ENCODE measurements at regions of chr13 and their contacts with region 1.

Region 1: GRCh38 chr13:99436686-99437416 is 64.4 kb upstream of the TM9SF2 start:
- DNase-seq: peak; percentile 78
- ATAC-seq: peak; percentile 72
- H3K4me3 ChIP-seq: peak overlapping the region in 1 of 2 experiments; percentile 34; a peak in 3 of 4 replicates
- H3K27ac ChIP-seq: no peak overlapping the region
- H3K4me1 ChIP-seq: peaks cover 6 to 43% of the 10 kb centered on the region in 2 experiments; a peak in 3 of 4 replicates
- H3K27me3 ChIP-seq: no peaks in the 10 kb centered on the region
- CTCF ChIP-seq: peak; percentile 100
- POLR2A ChIP-seq: no peak
- RAD21 ChIP-seq: peak; percentile 92

Region 2: GRCh38 chr13:98598043-98598442 is 838.8 kb before region 1 on chr13:
- CTCF ChIA-PET with region 1: no interaction called
- POLR2A ChIA-PET with region 1: no interaction called
- RAD21 ChIA-PET with region 1: no interaction called
- intact Hi-C with region 1: no loop called
- DNase-seq: no peak
- ATAC-seq: peak; percentile 82
- H3K4me3 ChIP-seq: no peak overlapping the region
- H3K27ac ChIP-seq: no peak overlapping the region
- H3K4me1 ChIP-seq: no peaks in the 10 kb centered on the region
- H3K27me3 ChIP-seq: peaks cover 2% of the 10 kb centered on the region; the same call in 1 of the 2 replicates
- CTCF ChIP-seq: peak; percentile 24 to 51 (median 35); a peak in 3 of 6 replicates
- POLR2A ChIP-seq: no peak
- RAD21 ChIP-seq: peak; percentile 63

Region 3: DNA sequence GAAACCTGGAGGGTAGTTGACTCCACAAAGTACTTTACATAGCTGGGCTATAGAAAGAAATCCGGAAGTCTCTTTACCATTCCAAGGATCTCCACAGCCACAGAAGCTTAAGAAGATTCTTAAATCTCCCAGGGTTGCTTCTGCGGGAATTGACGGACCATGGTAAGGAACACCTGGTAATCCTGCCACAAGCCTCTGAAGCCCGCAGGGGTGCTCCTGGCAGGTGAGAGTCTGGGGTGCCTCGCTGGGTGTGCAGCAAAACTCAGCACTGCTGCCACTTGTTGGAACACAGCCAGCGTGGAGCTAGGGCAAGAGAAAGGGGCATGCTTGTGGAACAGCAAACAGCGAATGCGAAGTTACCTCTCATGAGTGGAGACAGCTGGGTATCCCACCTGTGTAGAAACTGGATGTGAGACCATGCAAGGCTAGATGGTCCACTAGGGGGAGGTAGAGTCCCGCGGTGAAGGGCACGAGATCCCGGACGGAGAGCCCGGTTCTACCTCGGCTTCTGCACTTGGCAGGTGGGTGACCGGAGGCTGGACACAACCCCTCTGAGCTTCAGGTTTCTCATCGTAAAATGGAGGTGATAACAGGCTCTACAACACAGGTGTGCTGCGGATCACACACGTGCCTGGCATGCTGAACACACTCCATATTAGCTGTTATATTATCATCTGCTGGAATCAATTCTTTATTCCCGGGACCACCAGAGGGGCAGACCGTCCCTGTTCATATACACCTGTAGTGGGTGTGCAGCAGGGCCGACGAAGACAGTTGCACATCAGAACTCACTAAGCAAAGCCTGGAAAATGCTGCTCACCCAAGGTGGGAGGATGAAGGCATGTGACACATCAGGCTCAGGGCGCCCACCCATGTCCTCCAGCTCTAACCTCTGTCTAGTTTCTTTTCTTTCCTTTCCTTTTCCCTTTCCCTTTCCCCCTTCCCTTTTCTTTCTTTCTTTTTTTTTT is 260.3 kb before region 1 on chr13:
- CTCF ChIA-PET with region 1: interaction called, 21 read pairs
- POLR2A ChIA-PET with region 1: no interaction called
- RAD21 ChIA-PET with region 1: no interaction called
- intact Hi-C with region 1: loop called (anchors 1 kb)
- DNase-seq: peak; percentile 62
- ATAC-seq: peak; percentile 98
- H3K4me3 ChIP-seq: no peak overlapping the region
- H3K27ac ChIP-seq: no peak overlapping the region
- H3K4me1 ChIP-seq: peaks cover 0 to 10% of the 10 kb centered on the region in 2 experiments; a peak in 1 of 4 replicates
- H3K27me3 ChIP-seq: no peaks in the 10 kb centered on the region
- CTCF ChIP-seq: peak; percentile 91 to 98 (median 94)
- POLR2A ChIP-seq: no peak
- RAD21 ChIP-seq: peak; percentile 94

Region 4: GRCh38 chr13:99386911-99387788 is 49.7 kb before region 1 on chr13:
- CTCF ChIA-PET with region 1: interaction called, 3 read pairs
- POLR2A ChIA-PET with region 1: no interaction called
- RAD21 ChIA-PET with region 1: no interaction called
- intact Hi-C with region 1: loop called (anchors 1 kb)
- DNase-seq: peak; percentile 12
- ATAC-seq: peak; percentile 80
- H3K4me3 ChIP-seq: no peak overlapping the region
- H3K27ac ChIP-seq: no peak overlapping the region
- H3K4me1 ChIP-seq: peaks cover 0 to 7% of the 10 kb centered on the region in 2 experiments; a peak in 2 of 4 replicates
- H3K27me3 ChIP-seq: no peaks in the 10 kb centered on the region
- CTCF ChIP-seq: peak; percentile 86 to 98 (median 92)
- POLR2A ChIP-seq: no peak
- RAD21 ChIP-seq: peak; percentile 63